ENCODE measurements at regions of chr10 and their contacts with region 1.

Region 1: GRCh38 chr10:101042667-101043355 is 11.8 kb downstream of the SFXN3 start:
- DNase-seq: peak; percentile 96
- H3K4me3 ChIP-seq: peak overlapping the region; percentile 44 to 56 (median 54)
- H3K27ac ChIP-seq: peak overlapping the region; percentile 86
- H3K4me1 ChIP-seq: peaks cover 39% of the 10 kb centered on the region
- H3K27me3 ChIP-seq: no peaks in the 10 kb centered on the region
- CTCF ChIP-seq: no peak

Region 2: GRCh38 chr10:100858261-100858660 is 184.6 kb before region 1 on chr10:
- CTCF ChIA-PET with region 1: no interaction called
- dilution Hi-C with region 1: no loop called
- in situ Hi-C with region 1: no loop called
- intact Hi-C with region 1: no loop called
- DNase-seq: no peak
- H3K4me3 ChIP-seq: no peak overlapping the region
- H3K27ac ChIP-seq: no peak overlapping the region
- H3K4me1 ChIP-seq: no peaks in the 10 kb centered on the region
- H3K27me3 ChIP-seq: peaks cover 11% of the 10 kb centered on the region
- CTCF ChIP-seq: no peak

Region 3: DNA sequence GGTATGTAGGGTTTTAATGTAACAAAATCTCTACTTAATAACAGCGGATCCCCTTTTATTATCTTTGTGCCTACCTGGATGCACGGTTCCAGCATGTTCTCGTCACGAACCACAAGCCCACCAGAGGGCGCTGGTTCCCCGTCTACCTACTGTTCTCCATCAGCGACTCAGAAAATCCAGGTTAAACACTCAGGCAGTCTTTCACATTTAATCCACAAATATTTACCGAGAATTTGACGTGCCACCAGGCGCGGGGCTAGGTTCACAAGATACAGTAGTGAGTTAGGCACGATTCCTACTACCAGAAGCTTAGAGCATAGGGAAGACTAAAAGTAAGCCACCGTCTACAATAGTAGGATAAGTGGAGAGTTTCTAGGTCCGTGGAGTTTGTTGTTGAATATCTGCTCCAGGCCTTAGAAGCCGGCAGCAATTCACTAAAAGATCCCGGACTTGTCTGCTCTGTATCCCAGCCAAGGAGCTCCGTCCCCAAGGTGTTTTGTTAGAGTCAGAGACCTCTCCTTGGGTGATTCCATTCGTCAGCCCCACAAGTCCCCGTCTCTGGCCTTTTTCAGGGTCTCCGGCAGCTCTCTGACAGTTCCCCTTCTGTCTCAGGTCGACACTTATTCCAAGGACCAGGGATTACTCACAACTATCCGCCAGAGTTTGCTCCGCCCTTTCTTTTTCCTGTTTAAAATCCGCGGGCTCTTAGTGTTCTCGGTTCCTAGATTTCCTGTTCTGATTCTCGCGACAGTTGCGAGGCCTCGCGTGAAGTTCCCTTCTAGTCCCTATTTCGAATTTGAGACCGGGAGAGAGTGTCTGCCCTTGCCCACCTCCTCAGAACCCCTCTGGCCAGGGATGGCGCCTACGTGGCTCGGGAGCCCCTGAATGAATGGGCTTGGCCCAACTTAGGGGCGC is 17.5 kb after region 1 on chr10:
- CTCF ChIA-PET with region 1: interaction called, 5 read pairs
- dilution Hi-C with region 1: no loop called
- in situ Hi-C with region 1: no loop called
- intact Hi-C with region 1: loop called (anchors 2 kb)
- DNase-seq: peak; percentile 93
- H3K4me3 ChIP-seq: peak overlapping the region; percentile 80 to 100 (median 81)
- H3K27ac ChIP-seq: peak overlapping the region; percentile 95
- H3K4me1 ChIP-seq: peaks cover 25% of the 10 kb centered on the region
- H3K27me3 ChIP-seq: no peaks in the 10 kb centered on the region
- CTCF ChIP-seq: peak; percentile 88 to 95